GM10248 (cell line): ENCODE measurements at regions of chr12 and their contacts with region 1.

Region 1: DNA sequence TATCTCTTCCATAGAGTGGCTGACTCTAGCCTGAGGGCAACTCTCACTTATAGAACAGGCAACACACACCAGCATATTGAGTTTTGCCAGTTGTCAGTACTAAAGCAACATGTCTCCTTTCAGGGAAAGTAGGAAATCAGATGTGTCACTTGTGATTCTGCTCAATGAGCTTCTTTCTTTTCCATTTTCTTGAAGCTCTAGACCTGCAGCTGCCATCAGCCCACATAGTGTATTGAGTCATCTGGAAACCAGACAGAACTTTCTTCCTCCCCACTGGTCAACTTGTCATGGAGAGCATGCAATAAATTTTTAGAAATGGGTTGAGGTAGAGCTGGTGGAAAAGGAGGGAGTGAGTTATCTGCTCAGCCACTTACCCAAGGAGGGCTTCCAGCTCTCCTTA is 209.0 kb upstream of the PLEKHG7 start:
- DNase-seq: peak; percentile 28
- CTCF ChIP-seq: no peak

Region 2: GRCh38 chr12:92478692-92479091 is 15.1 kb before region 1 on chr12:
- CTCF ChIA-PET with region 1: interaction called, 26 read pairs
- POLR2A ChIA-PET with region 1: no interaction called
- DNase-seq: no peak
- CTCF ChIP-seq: no peak